Caco-2 (cell line): ENCODE measurements at regions of chr10 and their contacts with region 1.

Region 1: GRCh38 chr10:45008524-45009161 is 7.9 kb downstream of the ZNF22 start:
- DNase-seq: peak in 1 of 2 experiments; percentile 83
- H3K4me3 ChIP-seq: no peak overlapping the region
- H3K4me3 Mint-ChIP-seq: no peak overlapping the region
- H3K27ac Mint-ChIP-seq: no peak overlapping the region
- H3K4me1 ChIP-seq: peaks cover 5% of the 10 kb centered on the region; the same call in 1 of the 2 replicates
- H3K4me1 Mint-ChIP-seq: peaks cover 2% of the 10 kb centered on the region
- H3K27me3 ChIP-seq: no peaks in the 10 kb centered on the region
- H3K27me3 Mint-ChIP-seq: no peaks in the 10 kb centered on the region
- CTCF ChIP-seq: peak; percentile 87 to 90

Region 2: DNA sequence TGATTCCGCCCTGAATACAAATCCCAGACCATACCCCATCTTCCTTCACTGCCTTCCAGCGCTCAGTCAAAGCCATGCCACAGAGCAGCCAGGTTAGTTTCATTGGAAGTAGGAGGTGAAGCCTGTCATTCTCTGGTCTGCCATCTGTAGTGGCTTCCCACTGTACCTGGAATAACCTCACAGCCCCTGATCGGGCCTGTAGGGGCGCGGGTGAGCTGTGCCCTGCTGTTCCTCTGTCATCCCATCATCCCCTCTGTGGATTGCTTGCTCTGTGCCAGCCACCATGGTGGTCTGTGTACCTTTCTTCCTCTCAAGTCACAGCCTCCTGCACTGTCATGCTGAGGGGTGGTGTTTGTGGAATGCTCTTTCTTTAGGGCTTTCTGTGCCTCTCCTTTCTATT is 147.1 kb after region 1 on chr10:
- CTCF ChIA-PET with region 1: no interaction called
- POLR2A ChIA-PET with region 1: no interaction called
- intact Hi-C with region 1: loop called (anchors 10 kb)
- DNase-seq: peak; percentile 38
- H3K4me3 ChIP-seq: no peak overlapping the region
- H3K4me3 Mint-ChIP-seq: no peak overlapping the region
- H3K27ac Mint-ChIP-seq: no peak overlapping the region
- H3K4me1 ChIP-seq: no peaks in the 10 kb centered on the region
- H3K4me1 Mint-ChIP-seq: no peaks in the 10 kb centered on the region
- H3K27me3 ChIP-seq: no peaks in the 10 kb centered on the region
- H3K27me3 Mint-ChIP-seq: peaks cover 16% of the 10 kb centered on the region
- CTCF ChIP-seq: peak; percentile 34 to 64

Region 3: GRCh38 chr10:45235798-45236231 is 227.2 kb after region 1 on chr10:
- CTCF ChIA-PET with region 1: no interaction called
- POLR2A ChIA-PET with region 1: no interaction called
- intact Hi-C with region 1: loop called (anchors 2 kb)
- DNase-seq: no peak
- H3K4me3 ChIP-seq: no peak overlapping the region
- H3K4me3 Mint-ChIP-seq: no peak overlapping the region
- H3K27ac Mint-ChIP-seq: no peak overlapping the region
- H3K4me1 ChIP-seq: no peaks in the 10 kb centered on the region
- H3K4me1 Mint-ChIP-seq: no peaks in the 10 kb centered on the region
- H3K27me3 ChIP-seq: no peaks in the 10 kb centered on the region
- H3K27me3 Mint-ChIP-seq: peaks cover 11% of the 10 kb centered on the region
- CTCF ChIP-seq: no peak

Region 4: GRCh38 chr10:45373576-45374349 is 365.1 kb after region 1 on chr10 and contains the start of gene ALOX5:
- CTCF ChIA-PET with region 1: no interaction called
- POLR2A ChIA-PET with region 1: no interaction called
- intact Hi-C with region 1: loop called (anchors 10 kb)
- DNase-seq: peak; percentile 69 to 75
- H3K4me3 ChIP-seq: peak within 1 kb of the TSS; percentile 35
- H3K4me3 Mint-ChIP-seq: peak within 1 kb of the TSS; percentile 82
- H3K27ac Mint-ChIP-seq: no peak within 1 kb of the TSS
- H3K4me1 ChIP-seq: peaks cover 9% of the 10 kb centered on the region
- H3K4me1 Mint-ChIP-seq: no peaks in the 10 kb centered on the region
- H3K27me3 ChIP-seq: peaks cover 13% of the 10 kb centered on the region
- H3K27me3 Mint-ChIP-seq: peaks cover 36% of the 10 kb centered on the region
- CTCF ChIP-seq: no peak
- total RNA-seq, gene ALOX5: not detected in 2 replicates